Activated CD8-positive, alpha-beta memory T cell treated with anti-CD3 and anti-CD28 coated beads, Interleukin-2, amount 10 ng/mL, durations not matched to agents 7 days and 5 days (primary cell): ENCODE measurements at regions of chr6 and their contacts with region 1.

Region 1: GRCh38 chr6:25138237-25139125 is 140.7 kb upstream of the CARMIL1 start:
- DNase-seq: peak; percentile 88
- ATAC-seq: peak; percentile 95
- H3K4me3 Mint-ChIP-seq: peak overlapping the region; percentile 89
- H3K27ac Mint-ChIP-seq: peak overlapping the region; percentile 99
- H3K4me1 Mint-ChIP-seq: peaks cover 43% of the 10 kb centered on the region
- H3K27me3 Mint-ChIP-seq: no peaks in the 10 kb centered on the region

Region 2: DNA sequence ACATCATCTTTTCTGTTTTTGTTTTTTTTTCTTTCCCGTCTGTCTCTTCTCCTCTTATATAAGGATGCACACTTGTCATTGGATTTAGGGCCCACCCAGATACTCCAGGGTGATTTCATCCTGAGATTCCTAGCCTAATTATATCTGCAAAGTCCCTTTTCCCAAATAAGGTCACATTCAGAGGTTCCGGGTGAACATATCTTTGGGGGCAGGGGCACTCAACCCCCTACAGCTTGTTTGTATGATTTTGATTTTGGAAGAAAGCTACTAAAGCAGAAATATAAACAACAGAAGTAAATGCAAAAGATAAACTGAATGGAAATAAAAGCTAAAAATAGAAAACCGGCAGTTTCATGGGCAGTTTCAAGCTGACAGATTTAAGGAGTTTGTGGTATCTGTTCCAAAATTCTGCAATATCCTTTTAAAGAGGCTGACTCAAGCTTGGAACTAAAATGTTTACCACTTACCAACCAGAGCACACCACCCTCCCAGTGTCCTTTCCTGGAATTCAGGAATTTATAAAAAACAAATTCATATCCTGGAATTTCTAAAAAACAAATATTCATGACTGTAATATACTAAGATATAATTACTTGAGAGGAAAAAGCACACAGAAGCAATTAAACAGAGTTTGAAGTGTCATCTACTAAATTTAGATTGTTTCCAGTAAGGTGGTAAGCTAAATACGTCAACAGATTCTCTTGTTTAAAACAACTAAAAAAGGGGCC is 40.7 kb after region 1 on chr6:
- CTCF ChIA-PET with region 1: interaction called, 11 read pairs
- DNase-seq: no peak
- ATAC-seq: no peak
- H3K4me3 Mint-ChIP-seq: no peak overlapping the region
- H3K27ac Mint-ChIP-seq: peak overlapping the region; percentile 36
- H3K4me1 Mint-ChIP-seq: peaks cover 55% of the 10 kb centered on the region
- H3K27me3 Mint-ChIP-seq: no peaks in the 10 kb centered on the region

Region 3: GRCh38 chr6:25377664-25378063 is 239.2 kb after region 1 on chr6:
- CTCF ChIA-PET with region 1: no interaction called
- DNase-seq: no peak
- ATAC-seq: peak; percentile 9
- H3K4me3 Mint-ChIP-seq: no peak overlapping the region
- H3K27ac Mint-ChIP-seq: no peak overlapping the region
- H3K4me1 Mint-ChIP-seq: peaks cover 12% of the 10 kb centered on the region
- H3K27me3 Mint-ChIP-seq: no peaks in the 10 kb centered on the region